ENCODE measurements at regions of chr10 and their contacts with region 1.

Region 1: DNA sequence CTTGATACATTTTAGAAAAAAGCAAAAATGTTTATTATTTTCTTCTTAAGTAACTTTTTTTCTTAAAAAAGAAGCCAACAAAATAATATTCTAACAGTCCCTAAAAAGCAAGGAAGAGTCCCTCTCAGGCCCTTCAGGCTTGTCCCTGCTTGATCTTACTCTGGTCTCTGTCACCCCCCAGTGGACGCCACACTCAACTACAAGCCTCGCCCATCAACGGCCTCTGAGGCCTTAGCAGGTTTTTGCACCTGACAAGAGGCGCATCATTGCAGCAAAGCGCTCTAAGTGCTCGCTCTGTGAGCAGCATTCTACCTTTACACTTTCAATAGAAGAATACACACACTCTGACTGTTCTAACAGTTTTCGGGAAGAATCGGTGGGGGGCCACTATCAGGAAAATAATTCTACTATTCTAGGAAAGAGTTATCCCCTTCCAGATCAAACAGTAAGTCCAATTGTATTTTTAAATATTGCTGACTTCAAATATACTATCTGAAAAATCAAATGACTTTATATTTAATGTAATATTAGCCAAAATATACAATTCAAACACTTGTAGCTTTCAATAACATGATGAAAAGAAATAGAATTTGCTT is 139.2 kb downstream of the USP6NL start:
- DNase-seq: peak; percentile 70 to 79 (median 74)
- ATAC-seq: peak; percentile 99
- H3K4me3 ChIP-seq: no peak overlapping the region
- H3K27ac ChIP-seq: no peak overlapping the region
- H3K4me1 ChIP-seq: no peaks in the 10 kb centered on the region
- H3K27me3 ChIP-seq: no peaks in the 10 kb centered on the region
- CTCF ChIP-seq: peak; percentile 83 to 93 (median 87)
- EP300 ChIP-seq: no peak
- POLR2A ChIP-seq: no peak
- RAD21 ChIP-seq: peak; percentile 81 to 88

Region 2: DNA sequence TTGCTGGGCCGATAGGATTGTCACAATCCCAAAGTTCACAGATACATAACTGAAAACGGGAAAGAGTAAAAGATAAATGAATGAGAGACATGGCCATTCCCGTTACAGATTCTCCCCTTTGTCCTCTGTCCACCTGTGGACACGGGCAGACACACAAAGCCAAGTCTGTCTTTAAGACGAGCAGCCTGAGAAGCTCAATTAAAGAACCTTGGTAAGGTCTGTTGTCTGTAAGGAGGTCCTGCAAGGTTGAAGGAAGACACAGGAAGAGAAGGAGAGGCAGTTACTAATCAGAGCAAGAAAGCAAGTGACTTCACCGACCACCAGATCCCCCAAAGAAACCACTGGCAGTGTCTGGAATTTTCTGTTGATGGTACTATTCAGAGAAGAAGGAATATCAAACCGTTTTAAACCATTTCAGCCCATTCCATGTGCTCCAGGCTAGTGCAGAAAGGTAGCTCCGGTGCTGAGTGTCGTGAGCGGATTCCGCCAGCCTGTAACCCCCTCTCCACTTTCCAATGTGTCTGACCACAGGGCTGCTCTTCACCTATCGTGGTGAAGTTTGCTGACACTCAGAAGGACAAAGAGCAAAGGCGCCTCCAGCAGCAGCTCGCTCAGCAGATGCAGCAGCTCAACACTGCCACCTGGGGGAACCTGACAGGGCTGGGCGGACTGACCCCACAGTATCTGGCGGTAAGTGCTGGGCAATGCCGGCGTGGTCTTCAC is 202.0 kb before region 1 on chr10:
- CTCF ChIA-PET with region 1: no interaction called
- POLR2A ChIA-PET with region 1: no interaction called
- in situ Hi-C with region 1: no loop called
- intact Hi-C with region 1: loop called (anchors 2 kb)
- DNase-seq: peak; percentile 66 to 88 (median 76)
- ATAC-seq: peak; percentile 100
- H3K4me3 ChIP-seq: no peak overlapping the region
- H3K27ac ChIP-seq: no peak overlapping the region
- H3K4me1 ChIP-seq: peaks cover 0 to 6% of the 10 kb centered on the region in 2 experiments; a peak in 2 of 5 replicates
- H3K27me3 ChIP-seq: no peaks in the 10 kb centered on the region
- CTCF ChIP-seq: peak; percentile 92 to 96 (median 96)
- EP300 ChIP-seq: no peak
- POLR2A ChIP-seq: no peak
- RAD21 ChIP-seq: peak; percentile 95 to 96

Region 3: GRCh38 chr10:11411926-11412545 is 60.2 kb before region 1 on chr10:
- CTCF ChIA-PET with region 1: interaction called, 5 read pairs
- POLR2A ChIA-PET with region 1: no interaction called
- in situ Hi-C with region 1: no loop called
- intact Hi-C with region 1: loop called (anchors 2 kb)
- DNase-seq: peak in 2 of 4 experiments; percentile 29 to 32
- ATAC-seq: peak; percentile 86
- H3K4me3 ChIP-seq: no peak overlapping the region
- H3K27ac ChIP-seq: no peak overlapping the region
- H3K4me1 ChIP-seq: peaks cover 0 to 4% of the 10 kb centered on the region in 2 experiments; a peak in 2 of 5 replicates
- H3K27me3 ChIP-seq: peaks cover 7 to 30% of the 10 kb centered on the region in 2 experiments; a peak in 3 of 5 replicates
- CTCF ChIP-seq: peak; percentile 47 to 55 (median 53); a peak in 5 of 6 replicates
- EP300 ChIP-seq: no peak
- POLR2A ChIP-seq: no peak
- RAD21 ChIP-seq: peak; percentile 7 to 71; a peak in 2 of 4 replicates

Region 4: GRCh38 chr10:11424456-11425297 is 47.6 kb before region 1 on chr10:
- CTCF ChIA-PET with region 1: interaction called, 7 read pairs
- POLR2A ChIA-PET with region 1: no interaction called
- in situ Hi-C with region 1: no loop called
- intact Hi-C with region 1: loop called (anchors 1 kb)
- DNase-seq: peak; percentile 72 to 81 (median 76)
- ATAC-seq: peak; percentile 96
- H3K4me3 ChIP-seq: no peak overlapping the region
- H3K27ac ChIP-seq: no peak overlapping the region
- H3K4me1 ChIP-seq: no peaks in the 10 kb centered on the region
- H3K27me3 ChIP-seq: peaks cover 0 to 9% of the 10 kb centered on the region in 2 experiments; a peak in 1 of 5 replicates
- CTCF ChIP-seq: peak; percentile 82 to 91 (median 88)
- EP300 ChIP-seq: no peak
- POLR2A ChIP-seq: no peak
- RAD21 ChIP-seq: peak; percentile 37 to 77

Region 5: DNA sequence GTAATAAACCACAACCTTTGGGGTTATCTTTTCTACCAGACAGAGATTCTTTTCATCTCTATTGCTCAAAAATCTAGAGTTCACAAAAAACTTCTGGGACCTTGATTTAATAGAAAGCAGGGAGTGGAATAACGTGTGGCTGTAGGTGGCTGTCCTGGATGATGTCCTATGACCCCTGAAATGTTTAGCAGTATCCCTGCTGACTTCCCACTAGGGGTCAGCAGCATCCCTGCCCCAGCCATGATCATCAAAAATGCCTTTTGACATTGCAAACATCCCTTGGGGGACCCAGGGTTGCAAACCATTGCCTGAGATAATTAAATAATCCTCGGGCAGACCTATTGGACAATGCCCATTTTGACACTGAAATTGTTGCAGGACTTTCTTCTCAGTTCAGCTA is 37.9 kb before region 1 on chr10:
- CTCF ChIA-PET with region 1: interaction called, 8 read pairs
- POLR2A ChIA-PET with region 1: no interaction called
- in situ Hi-C with region 1: no loop called
- intact Hi-C with region 1: loop called (anchors 1 kb)
- DNase-seq: peak; percentile 51 to 70 (median 60)
- ATAC-seq: peak; percentile 85
- H3K4me3 ChIP-seq: no peak overlapping the region
- H3K27ac ChIP-seq: no peak overlapping the region
- H3K4me1 ChIP-seq: peaks cover 0 to 10% of the 10 kb centered on the region in 2 experiments; a peak in 2 of 5 replicates
- H3K27me3 ChIP-seq: peaks cover 7 to 30% of the 10 kb centered on the region in 2 experiments; a peak in 3 of 5 replicates
- CTCF ChIP-seq: peak; percentile 67 to 79 (median 72)
- EP300 ChIP-seq: no peak
- POLR2A ChIP-seq: no peak
- RAD21 ChIP-seq: peak; percentile 43 to 85